Caco-2 (cell line): ENCODE measurements at regions of chr4 and their contacts with region 1.

Region 1: GRCh38 chr4:38675146-38676121 is 11.4 kb downstream of the KLF3 start:
- DNase-seq: peak; percentile 73 to 79
- H3K4me3 ChIP-seq: no peak overlapping the region
- H3K4me3 Mint-ChIP-seq: peak overlapping the region; percentile 39
- H3K27ac Mint-ChIP-seq: peak overlapping the region; percentile 39
- H3K4me1 ChIP-seq: peaks cover 43% of the 10 kb centered on the region
- H3K4me1 Mint-ChIP-seq: peaks cover 44% of the 10 kb centered on the region
- H3K27me3 ChIP-seq: no peaks in the 10 kb centered on the region
- H3K27me3 Mint-ChIP-seq: no peaks in the 10 kb centered on the region
- CTCF ChIP-seq: peak; percentile 72 to 82

Region 2: GRCh38 chr4:38069271-38069760 is 606.1 kb before region 1 on chr4:
- CTCF ChIA-PET with region 1: interaction called, 5 read pairs
- POLR2A ChIA-PET with region 1: no interaction called
- intact Hi-C with region 1: loop called (anchors 1 kb)
- DNase-seq: peak; percentile 50 to 56
- H3K4me3 ChIP-seq: no peak overlapping the region
- H3K4me3 Mint-ChIP-seq: no peak overlapping the region
- H3K27ac Mint-ChIP-seq: peak overlapping the region; percentile 23
- H3K4me1 ChIP-seq: peaks cover 5% of the 10 kb centered on the region
- H3K4me1 Mint-ChIP-seq: no peaks in the 10 kb centered on the region
- H3K27me3 ChIP-seq: no peaks in the 10 kb centered on the region
- H3K27me3 Mint-ChIP-seq: no peaks in the 10 kb centered on the region
- CTCF ChIP-seq: peak; percentile 37 to 72

Region 3: DNA sequence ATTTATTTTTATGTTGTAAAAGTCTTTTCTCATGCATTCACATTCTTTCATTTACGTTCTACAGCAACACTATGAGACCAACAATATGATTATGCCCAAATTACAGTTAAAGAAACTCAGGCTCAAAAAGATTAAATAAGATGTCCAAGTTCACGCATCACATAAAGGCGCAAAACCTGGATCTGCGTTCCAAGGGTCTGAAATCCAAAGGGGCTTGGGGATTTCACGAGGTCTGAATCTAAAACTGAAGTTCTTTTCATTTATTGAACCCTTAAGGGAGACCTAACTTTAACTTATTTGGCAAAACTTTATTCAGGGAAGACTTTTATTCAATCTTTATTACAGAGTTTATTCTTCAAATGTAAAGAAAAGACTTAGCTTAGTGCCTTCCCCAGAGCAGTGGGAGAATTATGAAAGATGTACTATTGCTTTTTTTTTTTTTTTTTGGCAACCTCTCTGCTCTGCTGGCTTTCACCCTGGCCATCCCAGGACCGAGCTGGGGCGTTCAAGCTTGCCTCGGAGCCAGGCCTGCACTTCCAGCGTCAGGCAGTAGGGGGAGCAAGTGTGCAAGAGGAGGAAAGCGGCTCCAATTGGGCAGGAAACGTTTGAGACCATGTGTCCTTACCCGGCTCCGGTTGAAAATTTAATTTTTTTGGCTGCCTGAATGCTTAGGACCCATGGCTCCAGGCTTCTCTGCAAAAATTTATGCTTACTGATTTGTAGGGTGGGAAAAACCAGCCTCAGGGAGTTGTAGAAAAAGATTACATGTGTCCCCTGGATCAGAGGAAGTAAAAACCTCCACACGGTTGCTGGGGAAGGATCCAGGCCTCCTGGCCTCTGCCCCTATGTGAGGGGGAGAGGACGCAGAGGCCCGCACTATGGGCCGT is 355.7 kb before region 1 on chr4:
- CTCF ChIA-PET with region 1: interaction called, 10 read pairs
- POLR2A ChIA-PET with region 1: no interaction called
- intact Hi-C with region 1: loop called (anchors 1 kb)
- DNase-seq: peak; percentile 83 to 89
- H3K4me3 ChIP-seq: no peak overlapping the region
- H3K4me3 Mint-ChIP-seq: peak overlapping the region; percentile 64
- H3K27ac Mint-ChIP-seq: no peak overlapping the region
- H3K4me1 ChIP-seq: peaks cover 17% of the 10 kb centered on the region
- H3K4me1 Mint-ChIP-seq: no peaks in the 10 kb centered on the region
- H3K27me3 ChIP-seq: no peaks in the 10 kb centered on the region
- H3K27me3 Mint-ChIP-seq: no peaks in the 10 kb centered on the region
- CTCF ChIP-seq: peak; percentile 91 to 92

Region 4: DNA sequence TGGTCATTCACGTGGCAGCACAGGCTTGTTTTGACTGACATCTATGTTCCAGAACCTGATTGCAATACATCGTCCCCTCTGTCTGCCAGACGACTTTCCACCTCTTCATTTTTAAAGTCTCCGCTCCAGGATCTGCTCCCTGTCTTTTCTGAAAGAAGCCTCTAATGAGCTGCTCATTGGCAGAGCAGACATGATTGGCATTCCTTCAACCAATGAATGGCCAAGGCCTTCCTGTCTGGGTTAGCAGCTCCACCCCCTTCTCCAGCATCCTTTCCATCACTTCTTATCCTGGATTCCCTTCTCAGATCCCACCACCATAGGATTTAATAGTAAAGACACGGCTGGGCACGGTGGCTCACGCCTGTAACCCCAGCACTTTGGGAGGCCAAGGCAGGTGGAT is 214.1 kb before region 1 on chr4:
- CTCF ChIA-PET with region 1: no interaction called
- POLR2A ChIA-PET with region 1: no interaction called
- intact Hi-C with region 1: no loop called
- DNase-seq: no peak
- H3K4me3 ChIP-seq: no peak overlapping the region
- H3K4me3 Mint-ChIP-seq: no peak overlapping the region
- H3K27ac Mint-ChIP-seq: no peak overlapping the region
- H3K4me1 ChIP-seq: no peaks in the 10 kb centered on the region
- H3K4me1 Mint-ChIP-seq: no peaks in the 10 kb centered on the region
- H3K27me3 ChIP-seq: no peaks in the 10 kb centered on the region
- H3K27me3 Mint-ChIP-seq: no peaks in the 10 kb centered on the region
- CTCF ChIP-seq: no peak

Region 5: GRCh38 chr4:38535717-38536116 is 139.7 kb before region 1 on chr4:
- CTCF ChIA-PET with region 1: no interaction called
- POLR2A ChIA-PET with region 1: no interaction called
- intact Hi-C with region 1: no loop called
- DNase-seq: no peak
- H3K4me3 ChIP-seq: no peak overlapping the region
- H3K4me3 Mint-ChIP-seq: no peak overlapping the region
- H3K27ac Mint-ChIP-seq: no peak overlapping the region
- H3K4me1 ChIP-seq: no peaks in the 10 kb centered on the region
- H3K4me1 Mint-ChIP-seq: no peaks in the 10 kb centered on the region
- H3K27me3 ChIP-seq: no peaks in the 10 kb centered on the region
- H3K27me3 Mint-ChIP-seq: peaks cover 3% of the 10 kb centered on the region
- CTCF ChIP-seq: no peak

Region 6: GRCh38 chr4:38570647-38571276 is 104.7 kb before region 1 on chr4:
- CTCF ChIA-PET with region 1: no interaction called
- POLR2A ChIA-PET with region 1: no interaction called
- intact Hi-C with region 1: loop called (anchors 2 kb)
- DNase-seq: peak; percentile 44 to 65
- H3K4me3 ChIP-seq: no peak overlapping the region
- H3K4me3 Mint-ChIP-seq: no peak overlapping the region
- H3K27ac Mint-ChIP-seq: peak overlapping the region; percentile 7
- H3K4me1 ChIP-seq: no peaks in the 10 kb centered on the region
- H3K4me1 Mint-ChIP-seq: peaks cover 2% of the 10 kb centered on the region
- H3K27me3 ChIP-seq: no peaks in the 10 kb centered on the region
- H3K27me3 Mint-ChIP-seq: no peaks in the 10 kb centered on the region
- CTCF ChIP-seq: no peak

Region 7: GRCh38 chr4:38620790-38621684 is 54.4 kb before region 1 on chr4:
- CTCF ChIA-PET with region 1: interaction called, 3 read pairs
- POLR2A ChIA-PET with region 1: no interaction called
- intact Hi-C with region 1: loop called (anchors 1 kb)
- DNase-seq: peak; percentile 81 to 90
- H3K4me3 ChIP-seq: no peak overlapping the region
- H3K4me3 Mint-ChIP-seq: peak overlapping the region; percentile 65
- H3K27ac Mint-ChIP-seq: peak overlapping the region; percentile 65
- H3K4me1 ChIP-seq: peaks cover 23% of the 10 kb centered on the region
- H3K4me1 Mint-ChIP-seq: peaks cover 21% of the 10 kb centered on the region
- H3K27me3 ChIP-seq: no peaks in the 10 kb centered on the region
- H3K27me3 Mint-ChIP-seq: no peaks in the 10 kb centered on the region
- CTCF ChIP-seq: no peak

Region 8: GRCh38 chr4:38663801-38664705 is 11.4 kb before region 1 on chr4 and contains the start of gene KLF3:
- CTCF ChIA-PET with region 1: interaction called, 4 read pairs
- POLR2A ChIA-PET with region 1: no interaction called
- intact Hi-C with region 1: loop called (anchors 1 kb)
- DNase-seq: peak; percentile 90
- H3K4me3 ChIP-seq: peak within 1 kb of the TSS; percentile 89
- H3K4me3 Mint-ChIP-seq: peak within 1 kb of the TSS; percentile 87
- H3K27ac Mint-ChIP-seq: peak within 1 kb of the TSS; percentile 97
- H3K4me1 ChIP-seq: peaks cover 29% of the 10 kb centered on the region
- H3K4me1 Mint-ChIP-seq: peaks cover 30% of the 10 kb centered on the region
- H3K27me3 ChIP-seq: no peaks in the 10 kb centered on the region
- H3K27me3 Mint-ChIP-seq: no peaks in the 10 kb centered on the region
- CTCF ChIP-seq: no peak
- total RNA-seq, gene KLF3: 33.2 and 34.8 TPM in 2 replicates

Region 9: DNA sequence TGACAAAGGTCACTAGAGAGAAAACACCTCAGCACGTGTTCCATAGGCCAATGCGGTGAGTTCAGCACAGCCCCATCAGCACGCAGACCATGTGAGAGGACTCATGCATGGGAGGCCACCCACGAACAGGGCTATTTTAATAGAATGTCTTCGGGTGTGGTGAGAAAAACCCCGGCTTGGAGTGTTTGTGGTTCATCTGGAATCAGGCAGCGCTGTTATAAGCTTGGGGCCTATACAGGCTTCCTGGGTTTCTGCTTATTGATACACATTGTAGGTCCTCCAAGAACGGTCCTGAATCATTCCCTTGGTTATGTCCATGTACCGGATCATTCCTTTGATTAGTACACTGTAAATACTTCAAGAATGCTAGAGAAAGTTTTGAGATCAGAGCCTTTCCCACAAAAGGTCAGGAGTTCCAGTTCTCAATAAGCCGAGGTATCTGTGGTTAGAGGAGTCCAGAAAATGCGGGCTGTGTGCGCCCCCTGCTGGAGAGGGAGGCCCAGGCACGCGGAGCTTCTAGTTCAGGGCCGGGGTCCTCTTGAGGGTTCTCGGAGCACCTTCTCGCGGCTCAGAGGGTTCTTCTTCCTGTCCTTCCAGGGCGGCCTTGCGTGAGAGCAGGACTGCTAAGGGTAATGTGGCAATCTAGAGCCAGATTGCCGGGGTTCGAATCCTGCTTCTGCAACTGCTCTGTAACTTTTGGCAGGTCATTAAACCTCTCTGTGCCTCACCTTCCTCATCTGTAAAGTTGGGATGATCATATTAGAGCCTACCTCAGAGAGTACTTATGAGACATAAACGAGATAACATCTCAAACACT is 55.6 kb after region 1 on chr4:
- CTCF ChIA-PET with region 1: no interaction called
- POLR2A ChIA-PET with region 1: no interaction called
- intact Hi-C with region 1: loop called (anchors 2 kb)
- DNase-seq: peak; percentile 67 to 80
- H3K4me3 ChIP-seq: no peak overlapping the region
- H3K4me3 Mint-ChIP-seq: no peak overlapping the region
- H3K27ac Mint-ChIP-seq: no peak overlapping the region
- H3K4me1 ChIP-seq: no peaks in the 10 kb centered on the region
- H3K4me1 Mint-ChIP-seq: no peaks in the 10 kb centered on the region
- H3K27me3 ChIP-seq: no peaks in the 10 kb centered on the region
- H3K27me3 Mint-ChIP-seq: no peaks in the 10 kb centered on the region
- CTCF ChIP-seq: peak; percentile 75 to 88